ENCODE measurements at regions of chr2 and their contacts with region 1.

Region 1: DNA sequence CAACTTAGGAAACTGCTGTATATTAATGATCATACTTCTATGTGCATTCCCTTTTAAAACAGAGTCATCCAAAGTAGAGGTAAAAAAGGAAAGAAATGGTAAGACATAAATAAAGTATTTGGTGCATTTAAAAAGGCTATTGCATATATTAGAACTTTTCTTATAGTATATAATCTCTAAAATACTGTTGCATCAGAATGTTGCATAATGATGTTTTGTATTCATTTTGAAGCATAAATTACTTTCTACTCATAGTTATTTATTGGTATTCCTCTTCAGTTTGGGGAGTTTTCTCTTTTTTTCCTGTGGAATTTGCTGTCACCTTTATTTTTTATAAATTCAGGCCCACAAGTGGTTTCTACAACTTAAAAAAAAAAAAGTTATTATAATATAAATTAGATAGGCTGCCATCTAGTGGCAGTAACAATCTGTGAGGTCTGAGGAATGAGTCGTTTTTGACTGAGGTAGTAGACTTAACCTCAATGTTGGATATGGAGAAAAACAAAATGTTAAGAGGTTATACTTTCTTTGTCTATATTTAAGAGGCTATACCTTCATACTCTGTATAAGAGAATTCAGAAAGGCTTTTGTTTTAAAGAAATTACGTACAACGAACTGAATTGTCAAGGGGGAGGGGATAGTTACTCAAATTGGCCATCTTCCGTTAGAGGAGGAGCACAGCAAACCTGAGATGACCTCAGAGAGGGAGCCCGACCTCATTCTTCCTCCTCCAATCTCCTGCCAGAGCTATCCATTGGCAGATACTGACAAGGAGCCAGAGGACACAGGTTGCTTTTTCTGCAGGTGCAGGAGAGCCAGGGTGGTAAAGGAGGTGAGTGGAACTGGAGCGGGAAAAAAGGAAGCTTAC is 23.8 kb downstream of the ANKAR start:
- DNase-seq: peak; percentile 70
- H3K4me3 ChIP-seq: no peak overlapping the region
- H3K27ac ChIP-seq: no peak overlapping the region
- H3K4me1 ChIP-seq: no peaks in the 10 kb centered on the region
- CTCF ChIP-seq: peak; percentile 85

Region 2: DNA sequence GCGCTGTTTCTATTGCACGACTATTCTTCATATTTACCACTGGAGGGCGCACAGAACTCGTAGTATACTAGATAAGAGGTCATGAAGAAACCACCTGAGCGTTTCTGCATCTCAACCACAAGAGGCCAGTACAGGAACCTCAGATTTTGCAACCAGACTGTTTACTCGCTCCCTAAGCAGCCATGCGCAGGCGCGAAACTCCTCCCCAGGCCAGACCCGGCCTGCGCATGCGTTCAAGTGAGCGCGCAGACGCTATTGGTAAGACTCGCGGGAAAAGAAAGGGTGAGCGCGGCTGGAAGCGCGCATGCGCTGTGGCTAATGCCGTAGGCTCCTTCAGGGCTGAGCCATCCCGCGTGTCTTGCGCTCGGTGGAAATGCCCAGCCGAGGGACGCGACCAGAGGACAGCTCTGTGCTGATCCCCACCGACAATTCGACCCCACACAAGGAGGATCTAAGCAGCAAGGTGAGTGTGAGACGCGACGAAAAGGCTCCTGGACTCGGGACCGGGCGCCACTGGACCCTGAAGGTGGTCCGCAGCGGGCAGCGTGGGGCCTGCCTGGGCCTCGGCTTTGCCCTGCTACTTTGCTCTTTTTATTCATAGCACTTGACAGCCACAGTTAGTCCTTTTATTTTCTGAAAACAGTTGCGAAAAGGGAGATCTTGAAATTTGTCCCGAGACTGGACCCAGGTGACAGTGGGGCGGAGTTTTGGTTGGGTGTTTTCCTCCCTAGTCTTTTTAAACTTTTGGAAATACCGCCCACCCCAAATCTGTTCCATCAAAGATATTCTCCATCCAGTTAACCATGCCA is 36.9 kb before region 1 on chr2 and contains the start of gene ASNSD1:
- CTCF ChIA-PET with region 1: interaction called, 4 read pairs
- POLR2A ChIA-PET with region 1: interaction called, 16 read pairs
- intact Hi-C with region 1: loop called (anchors 1 kb)
- DNase-seq: peak; percentile 100
- H3K4me3 ChIP-seq: peak within 1 kb of the TSS; percentile 90
- H3K27ac ChIP-seq: peak within 1 kb of the TSS; percentile 38
- H3K4me1 ChIP-seq: peaks cover 41% of the 10 kb centered on the region
- CTCF ChIP-seq: peak; percentile 99
- total RNA-seq, gene ASNSD1: 36.3 and 36.8 TPM in 2 replicates

Region 3: GRCh38 chr2:189679226-189679625 is 19.0 kb before region 1 on chr2:
- CTCF ChIA-PET with region 1: interaction called, 3 read pairs
- POLR2A ChIA-PET with region 1: interaction called, 13 read pairs
- intact Hi-C with region 1: loop called (anchors 2 kb)
- DNase-seq: no peak
- H3K4me3 ChIP-seq: no peak overlapping the region
- H3K27ac ChIP-seq: no peak overlapping the region
- H3K4me1 ChIP-seq: peaks cover 5% of the 10 kb centered on the region
- CTCF ChIP-seq: no peak

Region 4: GRCh38 chr2:189685540-189686229 is 12.6 kb before region 1 on chr2:
- CTCF ChIA-PET with region 1: interaction called, 3 read pairs
- POLR2A ChIA-PET with region 1: interaction called, 13 read pairs
- intact Hi-C with region 1: no loop called
- DNase-seq: no peak
- H3K4me3 ChIP-seq: no peak overlapping the region
- H3K27ac ChIP-seq: no peak overlapping the region
- H3K4me1 ChIP-seq: no peaks in the 10 kb centered on the region
- CTCF ChIP-seq: no peak

Region 5: DNA sequence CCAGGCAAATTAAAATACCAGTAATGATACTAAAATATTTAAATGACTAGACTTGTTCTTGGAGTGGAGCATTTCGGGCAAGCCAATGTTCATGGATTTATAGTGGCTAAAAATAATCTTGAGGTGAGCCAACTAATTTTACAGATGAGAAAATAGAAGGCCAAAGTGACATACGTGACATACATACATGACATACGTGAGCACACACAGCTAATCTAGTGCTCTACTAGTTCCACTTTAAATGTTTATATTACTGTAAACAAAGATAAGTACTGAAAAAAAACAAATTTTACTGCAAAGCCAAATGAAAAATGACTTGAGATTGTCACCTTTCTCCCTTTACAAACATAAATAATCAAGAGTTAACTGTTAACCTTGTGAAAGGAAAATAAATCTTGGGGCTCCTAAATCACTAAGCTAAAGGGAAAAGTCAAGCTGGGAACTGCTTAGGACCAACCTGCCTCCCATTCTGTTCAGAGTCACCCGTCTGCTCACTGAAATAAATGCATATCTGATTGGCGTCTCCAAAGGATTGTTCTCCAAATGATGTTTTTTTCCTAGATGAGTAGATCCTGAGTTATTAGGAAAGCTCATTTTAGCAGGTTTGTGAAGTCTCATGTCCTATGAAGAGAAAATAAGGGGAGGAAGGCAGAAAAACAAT is 182.7 kb after region 1 on chr2:
- CTCF ChIA-PET with region 1: no interaction called
- POLR2A ChIA-PET with region 1: no interaction called
- intact Hi-C with region 1: no loop called
- DNase-seq: no peak
- H3K4me3 ChIP-seq: no peak overlapping the region
- H3K27ac ChIP-seq: no peak overlapping the region
- H3K4me1 ChIP-seq: no peaks in the 10 kb centered on the region
- CTCF ChIP-seq: no peak